Activated naive CD4-positive, alpha-beta T cell treated with anti-CD3 and anti-CD28 coated beads for 36 hours (primary cell): ENCODE measurements at regions of chr2 and their contacts with region 1.

Region 1: DNA sequence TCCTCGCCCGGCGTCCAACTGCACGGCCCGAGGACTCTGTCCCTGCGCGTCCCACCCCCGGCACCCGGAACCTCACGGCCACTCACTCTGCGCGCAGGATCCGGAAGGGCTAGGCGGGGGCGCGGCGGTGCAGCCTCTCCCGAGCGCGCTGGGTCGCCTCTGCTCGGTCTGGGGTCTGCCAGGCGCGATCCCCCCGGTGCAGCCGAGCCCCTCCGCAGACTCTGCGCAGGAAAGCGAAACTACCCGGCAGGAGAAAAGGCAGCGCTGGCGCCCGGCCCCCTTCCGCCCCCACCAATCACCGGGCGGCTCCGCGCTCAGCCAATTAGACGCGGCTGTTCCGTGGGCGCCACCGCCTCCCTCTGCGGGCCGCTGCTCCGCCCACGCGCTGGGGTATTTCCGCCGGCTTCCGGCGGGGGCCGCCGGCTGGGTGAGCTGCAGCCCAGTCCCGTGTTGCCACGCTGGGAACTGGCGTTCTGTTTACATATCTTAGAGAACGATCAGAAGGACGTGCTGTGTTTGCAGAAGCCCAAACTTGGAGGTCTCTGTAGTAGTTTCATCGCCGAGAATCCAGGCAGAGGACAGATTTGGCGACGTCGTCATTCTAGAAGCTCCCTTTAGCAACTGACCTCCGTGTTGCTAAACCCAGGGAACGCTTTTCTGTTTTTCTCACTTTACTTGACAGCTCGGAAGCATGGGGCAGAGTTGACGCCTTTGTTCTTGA is at the start of gene STAT1:
- DNase-seq: peak; percentile 95
- H3K4me3 Mint-ChIP-seq: no peak within 1 kb of the TSS
- H3K27ac Mint-ChIP-seq: no peak within 1 kb of the TSS
- H3K4me1 Mint-ChIP-seq: peaks cover 39% of the 10 kb centered on the region
- H3K27me3 Mint-ChIP-seq: no peaks in the 10 kb centered on the region
- total RNA-seq, gene STAT1: 376 to 402 TPM

Region 2: DNA sequence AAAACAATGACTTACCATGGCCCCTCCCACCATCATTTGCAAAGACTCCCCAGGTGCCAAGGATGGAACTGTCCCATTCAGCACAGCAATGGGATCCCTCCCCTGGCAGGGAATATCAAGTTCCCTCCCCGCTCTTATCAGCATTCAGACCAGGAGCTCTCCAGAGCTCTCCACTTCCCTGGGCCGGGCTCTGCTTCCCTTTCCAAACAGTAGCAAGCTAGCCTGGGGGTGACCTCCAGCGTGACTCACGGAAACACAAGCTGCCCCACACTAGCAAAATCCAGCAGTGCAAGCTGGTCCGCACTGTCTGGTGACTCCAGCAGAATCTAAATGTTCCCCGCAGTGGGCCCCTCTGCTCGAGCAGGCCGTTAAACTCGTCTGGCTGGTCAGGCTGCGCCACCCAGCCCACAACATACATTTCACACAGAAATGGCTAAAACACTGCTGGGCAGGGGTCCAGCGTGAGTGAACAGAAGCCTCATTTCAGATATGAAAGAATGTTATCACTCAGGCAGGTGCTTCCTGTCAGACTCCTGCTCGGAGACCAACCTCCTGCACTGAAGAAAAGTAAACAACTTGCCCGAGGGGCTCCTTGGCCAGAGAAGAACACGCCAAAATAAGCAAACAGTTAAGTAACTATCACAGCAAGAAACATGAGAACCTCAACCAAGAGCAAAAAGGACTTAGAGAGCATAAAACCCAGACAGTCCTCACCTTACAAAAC is 34.0 kb before region 1 on chr2:
- CTCF ChIA-PET with region 1: no interaction called
- intact Hi-C with region 1: loop called (anchors 1 kb)
- DNase-seq: no peak
- H3K4me3 Mint-ChIP-seq: no peak overlapping the region
- H3K27ac Mint-ChIP-seq: peak overlapping the region; percentile 73
- H3K4me1 Mint-ChIP-seq: peaks cover 58% of the 10 kb centered on the region
- H3K27me3 Mint-ChIP-seq: no peaks in the 10 kb centered on the region

Region 3: DNA sequence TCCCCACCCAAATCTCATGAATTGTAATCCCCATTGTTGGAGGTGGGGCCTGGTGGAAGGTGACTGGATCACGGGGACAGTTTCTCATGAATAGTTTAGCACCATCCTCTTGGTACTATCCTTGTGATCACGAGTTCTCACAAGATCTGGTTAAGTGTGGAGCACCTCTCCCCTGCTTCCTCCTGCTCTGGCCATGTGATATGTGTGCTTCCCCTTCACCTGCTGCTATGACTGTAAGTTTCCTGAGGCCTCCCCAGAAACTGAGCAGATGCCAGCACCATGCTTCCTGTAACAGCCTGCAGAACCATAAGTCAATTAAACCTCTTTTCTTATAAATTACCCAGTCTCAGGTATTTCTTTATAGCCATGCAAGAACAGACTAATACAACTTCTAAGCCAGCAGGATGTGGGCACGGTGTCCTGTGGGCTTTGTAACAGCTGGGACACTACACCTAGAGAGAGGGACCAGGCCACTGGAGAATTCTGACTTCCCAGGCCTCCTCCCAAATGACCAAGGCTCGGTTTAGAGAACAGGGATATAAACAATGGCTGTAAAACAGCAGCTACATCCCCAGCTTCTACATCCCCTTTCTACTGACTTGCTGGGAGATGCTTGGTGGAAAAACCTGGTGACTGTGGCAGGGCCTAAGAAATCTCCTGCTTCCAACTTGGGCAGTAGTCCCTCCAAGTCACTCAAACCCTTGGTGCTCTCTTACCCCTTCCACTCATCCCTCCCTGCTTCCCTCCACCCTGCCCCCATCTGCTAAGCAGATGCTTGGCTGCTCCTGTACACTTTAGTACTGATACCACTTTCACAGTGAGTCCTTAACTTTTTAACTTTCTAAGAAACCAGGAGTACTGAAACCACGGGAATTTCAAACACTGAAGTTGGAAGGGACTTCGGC is 10.4 kb before region 1 on chr2:
- CTCF ChIA-PET with region 1: interaction called, 4 read pairs
- intact Hi-C with region 1: loop called (anchors 1 kb)
- DNase-seq: peak; percentile 49
- H3K4me3 Mint-ChIP-seq: no peak overlapping the region
- H3K27ac Mint-ChIP-seq: peak overlapping the region; percentile 80
- H3K4me1 Mint-ChIP-seq: peaks cover 76% of the 10 kb centered on the region
- H3K27me3 Mint-ChIP-seq: no peaks in the 10 kb centered on the region

Region 4: DNA sequence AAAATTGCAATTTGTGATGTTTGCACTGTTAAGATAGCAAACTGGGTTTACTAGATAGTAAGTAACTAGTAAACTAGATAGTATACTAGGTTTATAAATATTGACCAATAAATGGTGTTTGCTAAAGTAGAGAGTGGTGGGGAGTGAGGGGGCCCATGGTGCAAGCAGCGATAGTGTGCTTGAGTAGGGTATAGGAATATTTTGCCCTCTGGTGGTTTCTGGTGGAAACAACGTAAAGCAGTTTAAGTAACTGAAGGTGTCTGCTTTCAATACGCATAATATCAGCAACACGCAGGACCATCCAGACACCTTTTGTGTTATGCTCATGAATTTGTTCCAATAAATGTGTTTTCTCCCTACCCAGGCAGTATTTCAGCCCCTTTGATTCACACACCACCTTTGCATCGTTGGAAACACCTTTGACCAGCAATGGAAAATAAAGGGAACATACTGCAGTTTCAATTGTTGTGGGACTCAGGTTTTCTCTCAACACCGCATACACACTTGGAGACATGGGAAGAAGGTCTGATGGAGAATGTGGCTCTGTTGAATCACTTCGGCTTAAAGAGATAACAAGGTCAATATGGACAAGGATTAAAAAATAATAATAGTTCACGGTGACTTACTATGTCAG is 16.5 kb after region 1 on chr2:
- CTCF ChIA-PET with region 1: interaction called, 15 read pairs
- intact Hi-C with region 1: loop called (anchors 1 kb)
- DNase-seq: peak; percentile 59
- H3K4me3 Mint-ChIP-seq: no peak overlapping the region
- H3K27ac Mint-ChIP-seq: peak overlapping the region; percentile 44
- H3K4me1 Mint-ChIP-seq: peaks cover 48% of the 10 kb centered on the region
- H3K27me3 Mint-ChIP-seq: no peaks in the 10 kb centered on the region

Region 5: GRCh38 chr2:191265311-191266170 is 251.4 kb after region 1 on chr2:
- CTCF ChIA-PET with region 1: no interaction called
- intact Hi-C with region 1: no loop called
- DNase-seq: no peak
- H3K4me3 Mint-ChIP-seq: no peak overlapping the region
- H3K27ac Mint-ChIP-seq: no peak overlapping the region
- H3K4me1 Mint-ChIP-seq: peaks cover 7% of the 10 kb centered on the region
- H3K27me3 Mint-ChIP-seq: no peaks in the 10 kb centered on the region